Left ventricle myocardium inferior (tissue), 1 donor: ENCODE measurements at regions of chr11 and their contacts with region 1.

Region 1: DNA sequence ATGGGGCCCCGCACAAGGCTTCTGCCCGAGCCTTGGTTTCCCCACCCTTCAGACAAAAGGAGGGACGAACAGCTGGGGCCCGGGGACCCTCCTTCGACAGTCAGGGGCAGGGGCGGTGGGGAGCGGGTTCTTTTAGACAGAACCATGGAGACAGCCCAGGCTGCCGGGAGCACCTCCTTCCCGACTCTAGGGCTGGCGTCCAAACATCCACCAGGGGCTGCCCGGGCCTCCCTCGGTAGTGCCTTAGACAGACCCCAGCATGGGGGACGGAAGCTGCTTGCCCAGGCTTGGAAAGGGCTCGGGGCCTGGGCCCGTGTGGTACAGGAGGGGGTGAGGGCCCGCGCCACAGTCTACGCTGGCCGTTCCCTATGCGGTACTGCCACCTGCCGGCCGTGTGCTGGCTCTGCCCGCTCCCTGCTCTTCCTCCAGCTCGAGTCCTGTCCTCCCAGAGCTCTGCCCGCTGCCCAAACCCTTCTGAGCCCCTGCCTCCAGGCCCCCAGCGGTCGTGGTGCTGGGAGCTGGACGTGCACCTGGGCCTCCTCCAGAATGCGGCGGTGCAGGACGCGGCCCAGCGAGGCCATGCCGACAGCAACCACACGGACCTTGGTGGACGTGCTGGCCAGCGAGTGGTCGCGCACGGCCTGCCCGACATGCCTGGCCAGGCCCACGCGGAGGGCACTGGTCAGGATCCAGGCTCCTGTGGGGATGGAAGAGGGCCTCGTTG is 20.1 kb downstream of the TSSC4 start:
- DNase-seq: peak; percentile 69
- H3K4me3 ChIP-seq: peak overlapping the region; percentile 33
- H3K27ac ChIP-seq: no peak overlapping the region
- H3K4me1 ChIP-seq: peaks cover 13% of the 10 kb centered on the region
- H3K27me3 ChIP-seq: peaks cover 34% of the 10 kb centered on the region
- CTCF ChIP-seq: peak; percentile 95

Region 2: DNA sequence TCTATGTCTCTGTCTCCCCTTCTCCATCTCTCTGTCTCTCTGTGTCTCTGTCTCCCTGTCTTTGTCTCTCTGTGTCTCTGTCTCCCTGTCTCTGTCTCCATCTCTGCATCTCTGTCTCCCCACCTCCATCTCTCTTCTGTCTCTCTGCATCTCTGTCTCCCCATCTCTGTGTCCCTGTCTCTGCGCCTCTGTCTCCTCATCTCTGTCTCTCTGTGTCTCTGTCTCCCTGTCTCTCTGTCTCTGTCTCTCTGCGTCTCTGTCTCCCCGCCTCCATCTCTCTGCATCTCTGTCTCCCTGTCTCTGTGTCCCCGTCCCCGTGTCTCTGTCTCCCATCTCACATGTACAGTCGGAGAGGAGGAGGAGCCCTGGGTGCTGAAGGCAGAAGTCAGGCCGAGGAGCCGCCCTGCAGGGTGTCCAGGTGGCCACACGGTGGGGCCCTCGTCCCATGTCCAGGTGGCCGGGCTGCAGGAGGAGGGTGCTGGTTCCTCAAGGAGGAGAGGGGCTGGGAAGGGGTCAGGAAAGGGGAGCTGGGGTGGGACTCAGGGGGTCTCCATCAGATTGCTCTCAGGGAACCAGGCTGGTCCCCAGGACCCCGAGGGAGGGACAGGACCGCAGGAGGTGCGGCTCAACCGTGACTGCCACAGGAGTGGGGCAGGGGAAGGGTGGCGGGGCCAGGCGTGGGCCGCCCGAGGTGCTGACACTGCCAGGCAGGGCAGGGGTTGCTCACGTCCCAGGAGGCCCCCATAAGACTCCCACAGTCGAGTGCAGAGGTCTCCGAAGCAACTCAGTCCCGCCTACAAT is 223.5 kb before region 1 on chr11:
- intact Hi-C with region 1: loop called (anchors 10 kb)
- DNase-seq: peak; percentile 68
- H3K4me3 ChIP-seq: no peak overlapping the region
- H3K27ac ChIP-seq: no peak overlapping the region
- H3K4me1 ChIP-seq: peaks cover 9% of the 10 kb centered on the region
- H3K27me3 ChIP-seq: peaks cover 35% of the 10 kb centered on the region
- CTCF ChIP-seq: peak; percentile 82

Region 3: DNA sequence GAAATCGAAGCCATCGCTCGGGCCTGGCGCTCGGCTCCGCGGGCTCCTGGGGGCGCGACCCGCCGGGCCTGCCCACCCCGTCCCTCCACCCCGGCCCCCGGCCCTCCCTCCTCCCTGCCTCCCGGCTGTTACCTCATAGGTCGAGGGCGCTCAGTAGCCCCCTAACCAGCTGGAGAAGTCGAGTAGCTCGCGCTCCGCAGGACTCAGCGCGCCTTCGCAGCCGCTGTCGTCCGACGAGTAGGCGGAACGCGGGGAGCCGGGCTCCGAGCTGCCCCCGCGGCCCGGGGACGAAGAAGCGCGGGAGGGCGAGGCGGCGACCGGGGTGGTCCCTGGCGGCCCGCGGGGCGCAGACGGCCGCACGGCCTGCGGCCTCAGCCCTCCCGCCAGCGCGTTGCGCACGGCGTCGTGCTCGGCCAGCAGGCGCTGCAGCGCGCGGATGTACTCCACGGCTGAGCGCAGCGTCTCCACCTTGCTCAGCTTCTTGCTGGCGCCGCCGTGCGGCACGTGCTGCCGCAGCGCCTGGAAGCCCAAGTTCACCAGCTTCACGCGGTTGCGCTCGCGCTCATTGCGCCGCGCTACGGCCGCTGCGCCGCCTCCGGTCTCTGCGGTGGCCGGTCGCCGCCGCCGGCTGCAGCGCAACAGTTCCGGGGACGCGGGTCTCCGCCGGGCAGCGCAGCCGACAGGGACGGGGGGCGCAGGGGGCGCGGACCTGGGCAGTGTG is 150.9 kb before region 1 on chr11:
- intact Hi-C with region 1: no loop called
- DNase-seq: no peak
- H3K4me3 ChIP-seq: peak overlapping the region; percentile 64
- H3K27ac ChIP-seq: peak overlapping the region; percentile 33
- H3K4me1 ChIP-seq: peaks cover 27% of the 10 kb centered on the region
- H3K27me3 ChIP-seq: peaks cover 85% of the 10 kb centered on the region
- CTCF ChIP-seq: no peak

Region 4: GRCh38 chr11:2305140-2305840 is 115.4 kb before region 1 on chr11:
- intact Hi-C with region 1: loop called (anchors 5 kb)
- DNase-seq: peak; percentile 88
- H3K4me3 ChIP-seq: peak overlapping the region; percentile 67
- H3K27ac ChIP-seq: peak overlapping the region; percentile 96
- H3K4me1 ChIP-seq: peaks cover 41% of the 10 kb centered on the region
- H3K27me3 ChIP-seq: no peaks in the 10 kb centered on the region
- CTCF ChIP-seq: peak; percentile 95

Region 5: DNA sequence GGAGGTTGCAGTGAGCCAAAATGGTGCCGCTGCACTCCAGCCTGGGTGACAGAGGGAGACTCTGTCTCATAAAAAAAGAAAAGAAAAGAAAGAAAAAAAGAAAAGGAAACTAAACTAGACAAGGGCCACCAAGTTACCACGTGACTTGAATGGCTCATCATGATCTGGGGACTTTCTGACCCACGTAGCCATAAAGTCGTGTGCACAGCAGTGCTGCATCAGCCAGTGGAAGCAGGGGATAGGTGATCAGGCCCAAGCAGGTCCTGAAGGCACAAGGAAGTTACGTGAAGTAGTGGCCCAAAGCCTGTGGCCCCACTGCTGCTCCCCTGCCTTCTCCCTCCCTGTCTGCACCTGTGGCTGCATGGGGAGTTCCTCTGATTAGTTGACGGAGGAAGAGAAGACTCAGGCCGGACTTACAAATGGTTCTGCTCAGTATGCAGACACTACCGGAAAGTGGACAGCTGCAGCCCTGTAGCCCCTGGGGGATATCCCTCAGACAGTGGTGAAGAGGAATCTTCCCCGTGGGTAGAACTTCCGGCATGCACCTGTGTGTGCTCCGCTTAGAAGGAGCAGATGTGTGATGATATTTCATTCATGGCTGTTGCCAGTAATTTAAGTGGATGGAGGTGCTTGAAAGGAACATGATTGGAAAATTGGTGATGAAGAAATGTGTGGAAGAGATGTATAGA is 61.8 kb before region 1 on chr11:
- intact Hi-C with region 1: no loop called
- DNase-seq: no peak
- H3K4me3 ChIP-seq: no peak overlapping the region
- H3K27ac ChIP-seq: no peak overlapping the region
- H3K4me1 ChIP-seq: peaks cover 6% of the 10 kb centered on the region
- H3K27me3 ChIP-seq: no peaks in the 10 kb centered on the region
- CTCF ChIP-seq: no peak

Region 6: GRCh38 chr11:2885676-2886081 is 465.0 kb after region 1 on chr11 and contains the start of gene CDKN1C:
- intact Hi-C with region 1: loop called (anchors 10 kb)
- DNase-seq: peak; percentile 90
- H3K4me3 ChIP-seq: peak within 1 kb of the TSS; percentile 92
- H3K27ac ChIP-seq: peak within 1 kb of the TSS; percentile 91
- H3K4me1 ChIP-seq: peaks cover 64% of the 10 kb centered on the region
- H3K27me3 ChIP-seq: no peaks in the 10 kb centered on the region
- CTCF ChIP-seq: no peak
- total RNA-seq, gene CDKN1C: 33.0 TPM